CD4-positive, alpha-beta memory T cell (primary cell): ENCODE measurements at regions of chr6 and their contacts with region 1.

Region 1: GRCh38 chr6:127807806-127808517 is 92.9 kb downstream of the THEMIS start:
- DNase-seq: no peak
- H3K4me3 ChIP-seq: no peak overlapping the region
- H3K4me3 Mint-ChIP-seq: peak overlapping the region in 2 of 8 donors; percentile 22 to 45
- H3K27ac ChIP-seq: no peak overlapping the region
- H3K27ac Mint-ChIP-seq: peak overlapping the region in 6 of 7 donors; percentile 27 to 79 (median 46)
- H3K4me1 ChIP-seq: peaks cover 66% of the 10 kb centered on the region
- H3K4me1 Mint-ChIP-seq: peaks cover 60 to 89% (median 76%) of the 10 kb centered on the region in 4 donors
- H3K27me3 ChIP-seq: no peaks in the 10 kb centered on the region
- H3K27me3 Mint-ChIP-seq: no peaks in the 10 kb centered on the region

Region 2: GRCh38 chr6:127397729-127398630 is 410.0 kb before region 1 on chr6:
- CTCF ChIA-PET with region 1: no interaction called
- POLR2A ChIA-PET with region 1: no interaction called
- intact Hi-C with region 1: no loop called
- DNase-seq: no peak
- H3K4me3 ChIP-seq: no peak overlapping the region
- H3K4me3 Mint-ChIP-seq: no peak overlapping the region
- H3K27ac ChIP-seq: no peak overlapping the region
- H3K27ac Mint-ChIP-seq: no peak overlapping the region
- H3K4me1 ChIP-seq: no peaks in the 10 kb centered on the region
- H3K4me1 Mint-ChIP-seq: peaks cover 0 to 3% (median under 1%) of the 10 kb centered on the region in 4 donors
- H3K27me3 ChIP-seq: no peaks in the 10 kb centered on the region
- H3K27me3 Mint-ChIP-seq: peaks cover 1% of the 10 kb centered on the region in 2 donors

Region 3: DNA sequence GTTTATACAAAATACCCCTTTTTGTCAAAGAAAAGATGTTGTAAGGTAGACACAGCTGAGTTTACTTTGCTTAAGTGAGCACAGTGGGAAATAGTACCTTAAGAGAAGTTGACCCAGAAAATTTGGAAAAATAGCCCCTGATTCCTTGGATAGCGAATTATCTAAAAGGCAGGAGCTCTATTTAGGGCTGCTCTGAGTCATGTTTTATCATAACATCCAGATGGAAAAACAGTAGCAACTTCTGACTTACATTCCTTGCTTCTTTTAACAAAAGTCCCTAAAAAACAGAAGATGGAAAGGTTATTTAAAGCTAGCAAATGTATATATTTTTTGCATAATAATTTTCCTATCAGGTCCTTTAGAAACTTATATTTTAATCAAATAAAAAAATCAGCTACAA is 33.8 kb after region 1 on chr6:
- CTCF ChIA-PET with region 1: no interaction called
- POLR2A ChIA-PET with region 1: no interaction called
- intact Hi-C with region 1: loop called (anchors 5 kb)
- DNase-seq: no peak
- H3K4me3 ChIP-seq: no peak overlapping the region
- H3K4me3 Mint-ChIP-seq: no peak overlapping the region
- H3K27ac ChIP-seq: no peak overlapping the region
- H3K27ac Mint-ChIP-seq: no peak overlapping the region
- H3K4me1 ChIP-seq: peaks cover 28% of the 10 kb centered on the region
- H3K4me1 Mint-ChIP-seq: peaks cover 28 to 47% (median 38%) of the 10 kb centered on the region in 4 donors
- H3K27me3 ChIP-seq: no peaks in the 10 kb centered on the region
- H3K27me3 Mint-ChIP-seq: no peaks in the 10 kb centered on the region